ENCODE measurements at regions of chr10 and their contacts with region 1.

Region 1: DNA sequence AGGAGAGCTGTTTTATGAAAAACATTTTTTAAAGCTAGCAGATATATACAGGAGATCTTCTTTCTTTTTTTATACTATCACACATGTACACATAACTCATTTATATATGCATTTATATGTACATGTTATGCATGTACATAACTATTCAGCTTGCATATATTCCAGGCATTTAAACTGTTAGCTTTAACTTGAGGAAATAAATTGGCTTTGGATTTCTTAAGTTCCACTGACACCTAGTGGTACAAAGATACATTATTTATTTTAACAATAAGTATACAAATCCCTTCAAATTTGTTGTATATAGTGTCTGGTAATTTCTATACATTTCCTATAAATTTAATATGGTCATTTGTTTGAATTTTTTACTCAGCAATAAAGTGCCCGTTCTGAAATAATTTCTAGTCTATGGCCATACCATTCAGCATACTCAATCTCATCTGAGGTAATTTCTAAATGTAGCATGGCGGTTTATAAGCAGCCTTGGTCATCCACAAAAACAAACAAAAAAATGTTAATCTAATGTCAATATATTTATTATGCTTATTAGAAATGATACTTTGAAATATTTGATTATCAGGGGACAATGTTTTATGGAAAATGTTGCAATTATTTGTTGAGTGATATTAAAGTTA is 11.6 kb downstream of the ZDHHC6 start:
- DNase-seq: peak; percentile 55
- ATAC-seq: peak; percentile 65
- H3K4me3 ChIP-seq: no peak overlapping the region
- H3K27ac ChIP-seq: no peak overlapping the region
- H3K4me1 ChIP-seq: peaks cover 4 to 18% of the 10 kb centered on the region in 2 experiments; a peak in 3 of 4 replicates
- H3K27me3 ChIP-seq: no peaks in the 10 kb centered on the region
- CTCF ChIP-seq: peak; percentile 13 to 93 (median 82); a peak in 5 of 6 replicates
- POLR2A ChIP-seq: no peak
- RAD21 ChIP-seq: peak; percentile 98

Region 2: DNA sequence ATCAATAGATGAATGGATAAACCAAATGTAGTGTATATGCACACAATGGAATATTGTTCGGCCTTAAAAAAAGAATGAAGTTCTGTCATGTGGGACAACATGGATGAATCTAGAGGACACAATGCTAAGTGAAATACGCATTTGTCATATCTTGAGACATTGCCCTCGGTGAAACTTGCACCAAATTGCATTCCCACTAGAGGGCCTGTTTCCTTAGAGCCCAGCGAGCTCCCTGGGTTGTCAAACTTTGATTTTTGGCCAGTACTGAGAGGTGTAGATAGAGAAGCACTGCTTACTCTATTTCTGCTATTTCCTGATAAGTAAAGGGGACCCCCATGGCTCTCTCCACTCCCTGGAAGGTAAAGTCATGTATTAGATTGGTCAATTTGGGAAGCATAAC is 408.7 kb before region 1 on chr10:
- CTCF ChIA-PET with region 1: interaction called, 11 read pairs
- POLR2A ChIA-PET with region 1: no interaction called
- RAD21 ChIA-PET with region 1: no interaction called
- intact Hi-C with region 1: no loop called
- DNase-seq: peak; percentile 26
- ATAC-seq: peak; percentile 87
- H3K4me3 ChIP-seq: no peak overlapping the region
- H3K27ac ChIP-seq: no peak overlapping the region
- H3K4me1 ChIP-seq: no peaks in the 10 kb centered on the region
- H3K27me3 ChIP-seq: peaks cover 3% of the 10 kb centered on the region; the same call in 1 of the 2 replicates
- CTCF ChIP-seq: peak; percentile 43 to 71 (median 56); a peak in 5 of 6 replicates
- POLR2A ChIP-seq: no peak
- RAD21 ChIP-seq: peak; percentile 47

Region 3: GRCh38 chr10:112140110-112140970 is 294.8 kb before region 1 on chr10:
- CTCF ChIA-PET with region 1: interaction called, 90 read pairs
- POLR2A ChIA-PET with region 1: no interaction called
- RAD21 ChIA-PET with region 1: interaction called in 1 of 2 experiments, 3 read pairs
- intact Hi-C with region 1: loop called (anchors 1 kb)
- DNase-seq: peak; percentile 95
- ATAC-seq: peak; percentile 96
- H3K4me3 ChIP-seq: peak overlapping the region; percentile 11 to 13; a peak in 2 of 4 replicates
- H3K27ac ChIP-seq: no peak overlapping the region
- H3K4me1 ChIP-seq: peaks cover 2 to 15% of the 10 kb centered on the region in 2 experiments; a peak in 3 of 4 replicates
- H3K27me3 ChIP-seq: no peaks in the 10 kb centered on the region
- CTCF ChIP-seq: peak; percentile 99 to 100 (median 99)
- POLR2A ChIP-seq: no peak
- RAD21 ChIP-seq: peak; percentile 96

Region 4: DNA sequence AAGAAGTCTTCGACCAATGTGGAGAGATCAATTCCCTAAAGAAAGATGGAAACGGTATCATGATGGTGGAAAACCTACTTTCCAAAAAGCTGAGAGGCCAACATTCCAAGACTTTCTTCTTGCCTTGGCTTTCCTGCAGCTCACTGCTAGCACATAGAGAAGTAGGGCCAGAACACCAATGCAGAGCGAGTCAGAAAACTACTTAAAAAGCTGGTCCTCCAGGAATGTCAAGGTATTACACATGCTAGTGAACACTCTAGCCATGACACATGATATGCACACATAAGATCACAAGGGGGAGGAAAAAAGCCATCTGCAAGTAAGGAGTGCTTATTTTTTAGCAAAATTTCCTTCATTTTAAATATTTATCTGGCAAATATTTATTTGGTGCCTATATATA is 274.3 kb before region 1 on chr10:
- CTCF ChIA-PET with region 1: no interaction called
- POLR2A ChIA-PET with region 1: no interaction called
- RAD21 ChIA-PET with region 1: no interaction called
- intact Hi-C with region 1: no loop called
- DNase-seq: no peak
- ATAC-seq: no peak
- H3K4me3 ChIP-seq: no peak overlapping the region
- H3K27ac ChIP-seq: no peak overlapping the region
- H3K4me1 ChIP-seq: no peaks in the 10 kb centered on the region
- H3K27me3 ChIP-seq: no peaks in the 10 kb centered on the region
- CTCF ChIP-seq: no peak
- POLR2A ChIP-seq: no peak
- RAD21 ChIP-seq: no peak

Region 5: GRCh38 chr10:112314822-112315474 is 120.2 kb before region 1 on chr10:
- CTCF ChIA-PET with region 1: interaction called, 46 read pairs
- POLR2A ChIA-PET with region 1: interaction called, 6 read pairs
- RAD21 ChIA-PET with region 1: interaction called, 7 to 8 read pairs
- intact Hi-C with region 1: loop called (anchors 1 kb)
- DNase-seq: peak; percentile 72
- ATAC-seq: peak; percentile 95
- H3K4me3 ChIP-seq: no peak overlapping the region
- H3K27ac ChIP-seq: no peak overlapping the region
- H3K4me1 ChIP-seq: peaks cover 0 to 18% of the 10 kb centered on the region in 2 experiments; a peak in 1 of 4 replicates
- H3K27me3 ChIP-seq: no peaks in the 10 kb centered on the region
- CTCF ChIP-seq: peak; percentile 87 to 99 (median 98)
- POLR2A ChIP-seq: no peak
- RAD21 ChIP-seq: peak; percentile 96

Region 6: GRCh38 chr10:112375721-112376395 is 59.2 kb before region 1 on chr10:
- CTCF ChIA-PET with region 1: interaction called, 26 read pairs
- POLR2A ChIA-PET with region 1: interaction called, 5 read pairs
- RAD21 ChIA-PET with region 1: interaction called, 4 to 5 read pairs
- intact Hi-C with region 1: no loop called
- DNase-seq: no peak
- ATAC-seq: peak; percentile 1
- H3K4me3 ChIP-seq: peak overlapping the region; percentile 34 to 38
- H3K27ac ChIP-seq: peak overlapping the region; percentile 77
- H3K4me1 ChIP-seq: peaks cover 75 to 87% of the 10 kb centered on the region in 2 experiments
- H3K27me3 ChIP-seq: no peaks in the 10 kb centered on the region
- CTCF ChIP-seq: no peak
- POLR2A ChIP-seq: no peak
- RAD21 ChIP-seq: no peak

Region 7: GRCh38 chr10:112446855-112447711 is 12.0 kb after region 1 on chr10 and contains the starts of genes VTI1A and ZDHHC6:
- CTCF ChIA-PET with region 1: interaction called, 11 read pairs
- POLR2A ChIA-PET with region 1: no interaction called
- RAD21 ChIA-PET with region 1: no interaction called
- intact Hi-C with region 1: no loop called
- DNase-seq: peak; percentile 91
- ATAC-seq: peak; percentile 92
- H3K4me3 ChIP-seq: peak within 1 kb of the TSS; percentile 85 to 94
- H3K27ac ChIP-seq: peak within 1 kb of the TSS; percentile 83
- H3K4me1 ChIP-seq: peaks cover 16 to 24% of the 10 kb centered on the region in 2 experiments
- H3K27me3 ChIP-seq: no peaks in the 10 kb centered on the region
- CTCF ChIP-seq: peak in 2 of 3 experiments; percentile 43 to 56; a peak in 4 of 6 replicates
- POLR2A ChIP-seq: no peak
- RAD21 ChIP-seq: no peak
- total RNA-seq, gene VTI1A: 80.7 TPM
- total RNA-seq, gene ZDHHC6: 88.5 TPM

Region 8: GRCh38 chr10:112678581-112678980 is 243.5 kb after region 1 on chr10:
- CTCF ChIA-PET with region 1: no interaction called
- POLR2A ChIA-PET with region 1: no interaction called
- RAD21 ChIA-PET with region 1: no interaction called
- intact Hi-C with region 1: no loop called
- DNase-seq: no peak
- ATAC-seq: no peak
- H3K4me3 ChIP-seq: no peak overlapping the region
- H3K27ac ChIP-seq: no peak overlapping the region
- H3K4me1 ChIP-seq: no peaks in the 10 kb centered on the region
- H3K27me3 ChIP-seq: no peaks in the 10 kb centered on the region
- CTCF ChIP-seq: no peak
- POLR2A ChIP-seq: no peak
- RAD21 ChIP-seq: no peak

Measured in HCT116 (cell line).